CD4-positive, alpha-beta memory T cell (primary cell): ENCODE measurements at regions of chr12 and their contacts with region 1.

Region 1: GRCh38 chr12:44947163-44947562 is 71.0 kb upstream of the NELL2 start:
- DNase-seq: no peak
- H3K4me3 ChIP-seq: no peak overlapping the region
- H3K4me3 Mint-ChIP-seq: no peak overlapping the region
- H3K27ac ChIP-seq: no peak overlapping the region
- H3K27ac Mint-ChIP-seq: no peak overlapping the region
- H3K4me1 ChIP-seq: no peaks in the 10 kb centered on the region
- H3K4me1 Mint-ChIP-seq: peaks cover 3 to 5% (median 4%) of the 10 kb centered on the region in 4 donors
- H3K27me3 ChIP-seq: no peaks in the 10 kb centered on the region
- H3K27me3 Mint-ChIP-seq: peaks cover 8 to 15% of the 10 kb centered on the region in 2 donors

Region 2: GRCh38 chr12:43957732-43958372 is 989.3 kb before region 1 on chr12:
- CTCF ChIA-PET with region 1: interaction called, 3 read pairs
- POLR2A ChIA-PET with region 1: no interaction called
- intact Hi-C with region 1: loop called (anchors 2 kb)
- DNase-seq: peak in 4 of 5 donors; percentile 5 to 10 (median 10)
- H3K4me3 ChIP-seq: no peak overlapping the region
- H3K4me3 Mint-ChIP-seq: no peak overlapping the region
- H3K27ac ChIP-seq: no peak overlapping the region
- H3K27ac Mint-ChIP-seq: no peak overlapping the region
- H3K4me1 ChIP-seq: no peaks in the 10 kb centered on the region
- H3K4me1 Mint-ChIP-seq: peaks cover 0 to 20% (median 4%) of the 10 kb centered on the region in 4 donors
- H3K27me3 ChIP-seq: no peaks in the 10 kb centered on the region
- H3K27me3 Mint-ChIP-seq: no peaks in the 10 kb centered on the region

Region 3: DNA sequence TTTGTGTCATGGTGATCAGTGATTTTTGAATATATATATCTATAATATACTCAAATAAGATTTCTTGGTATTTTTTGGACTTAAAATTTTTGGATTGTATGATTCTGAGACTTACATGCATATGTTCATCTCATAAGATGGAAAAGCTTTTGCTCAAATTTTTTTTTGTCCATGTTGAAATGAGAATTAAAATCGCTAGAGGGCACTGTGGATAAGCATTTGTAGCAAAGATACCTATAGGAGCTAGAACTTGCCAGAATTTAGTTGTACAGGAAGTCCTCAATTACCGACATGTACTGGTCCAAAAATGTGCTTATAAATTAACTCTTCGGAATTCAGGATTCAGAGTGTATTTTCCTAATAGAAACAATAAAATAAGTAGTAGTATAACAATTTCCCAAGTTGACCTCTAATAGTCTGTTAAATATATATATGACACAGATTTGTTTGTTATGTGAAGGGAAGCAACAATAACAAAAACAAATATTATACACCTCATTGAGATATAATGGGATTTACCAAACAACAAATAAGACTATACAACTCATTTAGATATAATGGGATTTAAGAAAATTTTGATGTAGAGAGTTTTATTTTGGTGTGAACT is 931.7 kb before region 1 on chr12:
- CTCF ChIA-PET with region 1: interaction called, 11 read pairs
- POLR2A ChIA-PET with region 1: no interaction called
- intact Hi-C with region 1: loop called (anchors 2 kb)
- DNase-seq: peak in 4 of 5 donors; percentile 39 to 46 (median 41)
- H3K4me3 ChIP-seq: no peak overlapping the region
- H3K4me3 Mint-ChIP-seq: no peak overlapping the region
- H3K27ac ChIP-seq: no peak overlapping the region
- H3K27ac Mint-ChIP-seq: no peak overlapping the region
- H3K4me1 ChIP-seq: no peaks in the 10 kb centered on the region
- H3K4me1 Mint-ChIP-seq: peaks cover 0 to 2% (median under 1%) of the 10 kb centered on the region in 4 donors
- H3K27me3 ChIP-seq: no peaks in the 10 kb centered on the region
- H3K27me3 Mint-ChIP-seq: no peaks in the 10 kb centered on the region

Region 4: GRCh38 chr12:44544018-44544417 is 403.1 kb before region 1 on chr12:
- CTCF ChIA-PET with region 1: no interaction called
- POLR2A ChIA-PET with region 1: no interaction called
- intact Hi-C with region 1: no loop called
- DNase-seq: no peak
- H3K4me3 ChIP-seq: no peak overlapping the region
- H3K4me3 Mint-ChIP-seq: no peak overlapping the region
- H3K27ac ChIP-seq: no peak overlapping the region
- H3K27ac Mint-ChIP-seq: no peak overlapping the region
- H3K4me1 ChIP-seq: no peaks in the 10 kb centered on the region
- H3K4me1 Mint-ChIP-seq: peaks cover 0 to 8% (median 3%) of the 10 kb centered on the region in 4 donors
- H3K27me3 ChIP-seq: no peaks in the 10 kb centered on the region
- H3K27me3 Mint-ChIP-seq: peaks cover 0 to under 1% of the 10 kb centered on the region in 2 donors

Region 5: GRCh38 chr12:44960856-44961255 is 13.7 kb after region 1 on chr12:
- CTCF ChIA-PET with region 1: interaction called, 23 read pairs
- POLR2A ChIA-PET with region 1: no interaction called
- intact Hi-C with region 1: no loop called
- DNase-seq: no peak
- H3K4me3 ChIP-seq: no peak overlapping the region
- H3K4me3 Mint-ChIP-seq: no peak overlapping the region
- H3K27ac ChIP-seq: no peak overlapping the region
- H3K27ac Mint-ChIP-seq: no peak overlapping the region
- H3K4me1 ChIP-seq: no peaks in the 10 kb centered on the region
- H3K4me1 Mint-ChIP-seq: no peaks in the 10 kb centered on the region
- H3K27me3 ChIP-seq: no peaks in the 10 kb centered on the region
- H3K27me3 Mint-ChIP-seq: peaks cover 4 to 12% of the 10 kb centered on the region in 2 donors

Region 6: GRCh38 chr12:45112306-45112705 is 165.1 kb after region 1 on chr12:
- CTCF ChIA-PET with region 1: no interaction called
- POLR2A ChIA-PET with region 1: no interaction called
- intact Hi-C with region 1: no loop called
- DNase-seq: no peak
- H3K4me3 ChIP-seq: no peak overlapping the region
- H3K4me3 Mint-ChIP-seq: no peak overlapping the region
- H3K27ac ChIP-seq: no peak overlapping the region
- H3K27ac Mint-ChIP-seq: no peak overlapping the region
- H3K4me1 ChIP-seq: no peaks in the 10 kb centered on the region
- H3K4me1 Mint-ChIP-seq: no peaks in the 10 kb centered on the region
- H3K27me3 ChIP-seq: no peaks in the 10 kb centered on the region
- H3K27me3 Mint-ChIP-seq: peaks cover 0 to 5% of the 10 kb centered on the region in 2 donors